ENCODE measurements at regions of chr7 and their contacts with region 1.

Region 1: GRCh38 chr7:55534175-55534915 is 38.0 kb downstream of the VOPP1 start:
- DNase-seq: peak in 3 of 9 donors; percentile 7 to 79 (median 36)
- ATAC-seq: peak; percentile 75
- H3K4me3 ChIP-seq: no peak overlapping the region
- H3K4me3 Mint-ChIP-seq: peak overlapping the region; percentile 75 to 86 (median 82)
- H3K27ac ChIP-seq: no peak overlapping the region
- H3K27ac Mint-ChIP-seq: peak overlapping the region; percentile 74 to 98 (median 83)
- H3K4me1 ChIP-seq: peaks cover 57 to 75% of the 10 kb centered on the region in 2 donors
- H3K4me1 Mint-ChIP-seq: peaks cover 73 to 98% (median 90%) of the 10 kb centered on the region in 7 donors
- H3K27me3 ChIP-seq: no peaks in the 10 kb centered on the region
- H3K27me3 Mint-ChIP-seq: peaks cover 0 to 2% (median 0%) of the 10 kb centered on the region in 5 donors

Region 2: DNA sequence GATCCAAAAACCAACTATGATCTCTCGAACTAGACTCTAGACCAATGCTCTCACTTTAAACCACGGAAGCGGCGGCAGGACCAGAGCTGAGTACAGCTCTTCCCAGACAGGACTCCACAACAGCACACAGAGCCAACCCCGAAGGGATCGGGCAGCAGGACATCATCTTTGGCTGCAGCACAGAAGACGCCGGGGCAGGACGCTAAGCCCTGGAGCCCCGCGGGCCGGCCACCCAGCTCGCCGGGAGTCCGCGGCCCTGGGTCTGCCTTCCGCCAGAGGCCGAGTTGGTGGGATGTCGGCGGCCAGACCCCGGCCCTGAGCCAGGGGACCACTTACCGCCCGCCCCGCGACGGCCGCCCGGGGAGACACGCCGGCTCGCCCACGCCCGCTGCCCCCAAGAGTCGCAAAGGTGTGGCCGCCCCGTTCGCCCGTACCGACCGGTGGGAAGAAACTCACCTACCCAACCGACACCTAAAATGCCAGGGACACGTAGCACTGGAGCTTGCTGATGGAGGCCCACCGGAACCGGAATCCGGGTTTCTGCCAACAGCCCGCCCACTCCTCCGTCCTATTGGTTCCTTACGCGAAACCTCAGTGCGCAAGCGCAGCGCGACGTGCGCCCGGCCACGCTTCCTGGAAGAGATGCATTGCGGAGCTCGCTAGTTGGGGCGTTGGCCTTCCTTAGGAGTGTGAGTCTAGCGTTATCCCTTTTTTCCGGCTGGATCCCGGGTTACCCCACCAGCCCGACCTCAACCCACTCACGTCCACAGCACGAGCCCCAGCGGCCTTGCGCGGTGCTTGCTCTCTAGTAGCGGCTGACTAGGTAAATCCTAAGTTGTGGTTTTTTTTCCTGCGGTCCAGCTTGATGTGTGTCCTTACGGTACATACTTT is 775.4 kb before region 1 on chr7 and contains the start of gene SEC61G:
- CTCF ChIA-PET with region 1: no interaction called
- POLR2A ChIA-PET with region 1: no interaction called
- intact Hi-C with region 1: loop called in 1 of 2 experiments (anchors 1 kb)
- DNase-seq: peak; percentile 92 to 96 (median 94)
- ATAC-seq: peak; percentile 98
- H3K4me3 ChIP-seq: peak within 1 kb of the TSS; percentile 67
- H3K4me3 Mint-ChIP-seq: peak within 1 kb of the TSS; percentile 94 to 100 (median 100)
- H3K27ac ChIP-seq: peak within 1 kb of the TSS; percentile 83
- H3K27ac Mint-ChIP-seq: peak within 1 kb of the TSS; percentile 93 to 98 (median 96)
- H3K4me1 ChIP-seq: peaks cover 7 to 11% of the 10 kb centered on the region in 2 donors
- H3K4me1 Mint-ChIP-seq: peaks cover 15 to 54% (median 40%) of the 10 kb centered on the region in 7 donors
- H3K27me3 ChIP-seq: no peaks in the 10 kb centered on the region
- H3K27me3 Mint-ChIP-seq: peaks cover 0 to 21% (median 5%) of the 10 kb centered on the region in 5 donors
- total RNA-seq, gene SEC61G: 31.8 to 174 (median 46.6) TPM

Region 3: DNA sequence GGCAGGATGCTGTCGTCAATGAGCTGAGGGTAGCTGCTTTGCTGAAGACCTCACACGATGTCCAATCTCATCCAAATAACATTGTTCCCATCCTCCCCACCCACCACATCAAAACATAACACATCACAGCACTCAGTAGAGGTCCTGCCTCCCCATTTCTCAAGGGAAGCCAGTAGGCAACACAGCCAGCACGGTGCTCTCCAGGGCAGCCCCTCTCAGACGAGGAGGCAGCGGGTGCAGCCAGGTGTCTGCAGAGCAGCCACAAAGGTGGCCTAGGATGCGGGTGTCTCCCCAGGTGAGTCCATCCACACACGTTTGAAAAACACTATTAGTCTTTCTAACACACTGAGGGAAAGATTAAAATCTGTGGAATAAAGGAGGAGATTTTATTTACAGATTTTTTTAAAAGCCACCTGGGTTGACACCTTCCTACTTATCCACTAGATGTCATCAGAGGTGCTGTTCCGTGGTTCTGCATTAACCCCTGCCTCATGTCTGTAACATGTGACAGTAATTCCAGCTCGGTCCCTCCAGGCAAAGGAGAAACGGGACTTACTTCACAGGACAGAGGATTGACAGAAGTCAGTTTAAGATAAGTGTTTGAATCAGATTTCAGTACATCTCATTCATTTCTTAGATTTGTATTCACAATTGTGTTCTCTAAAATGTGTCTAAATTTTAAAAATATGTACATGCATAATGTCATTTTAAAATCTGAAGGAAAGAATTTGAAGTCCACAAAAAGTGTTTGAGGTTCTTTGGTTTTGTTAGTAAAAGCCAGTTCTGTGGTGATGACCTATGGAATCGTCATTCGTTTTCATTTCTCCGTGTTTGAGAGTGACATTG is 101.2 kb before region 1 on chr7:
- CTCF ChIA-PET with region 1: interaction called, 4 read pairs
- POLR2A ChIA-PET with region 1: interaction called, 3 read pairs
- intact Hi-C with region 1: loop called in 1 of 2 experiments (anchors 1 kb)
- DNase-seq: peak in 5 of 9 donors; percentile 44 to 54 (median 48)
- ATAC-seq: peak; percentile 61
- H3K4me3 ChIP-seq: no peak overlapping the region
- H3K4me3 Mint-ChIP-seq: peak overlapping the region in 1 of 10 donors; percentile 19
- H3K27ac ChIP-seq: no peak overlapping the region
- H3K27ac Mint-ChIP-seq: peak overlapping the region in 5 of 9 donors; percentile 7 to 76 (median 67)
- H3K4me1 ChIP-seq: peaks cover 0 to 29% of the 10 kb centered on the region in 2 donors
- H3K4me1 Mint-ChIP-seq: peaks cover 17 to 46% (median 40%) of the 10 kb centered on the region in 7 donors
- H3K27me3 ChIP-seq: no peaks in the 10 kb centered on the region
- H3K27me3 Mint-ChIP-seq: no peaks in the 10 kb centered on the region

Region 4: GRCh38 chr7:55477781-55478374 is 56.5 kb before region 1 on chr7:
- CTCF ChIA-PET with region 1: no interaction called
- POLR2A ChIA-PET with region 1: no interaction called
- intact Hi-C with region 1: loop called in 1 of 2 experiments (anchors 1 kb)
- DNase-seq: no peak
- ATAC-seq: no peak
- H3K4me3 ChIP-seq: no peak overlapping the region
- H3K4me3 Mint-ChIP-seq: peak overlapping the region in 7 of 10 donors; percentile 0 to 79 (median 66)
- H3K27ac ChIP-seq: peak overlapping the region; percentile 61
- H3K27ac Mint-ChIP-seq: peak overlapping the region; percentile 35 to 95 (median 92)
- H3K4me1 ChIP-seq: peaks cover 37 to 64% of the 10 kb centered on the region in 2 donors
- H3K4me1 Mint-ChIP-seq: peaks cover 48 to 98% (median 86%) of the 10 kb centered on the region in 7 donors
- H3K27me3 ChIP-seq: no peaks in the 10 kb centered on the region
- H3K27me3 Mint-ChIP-seq: no peaks in the 10 kb centered on the region

Region 5: DNA sequence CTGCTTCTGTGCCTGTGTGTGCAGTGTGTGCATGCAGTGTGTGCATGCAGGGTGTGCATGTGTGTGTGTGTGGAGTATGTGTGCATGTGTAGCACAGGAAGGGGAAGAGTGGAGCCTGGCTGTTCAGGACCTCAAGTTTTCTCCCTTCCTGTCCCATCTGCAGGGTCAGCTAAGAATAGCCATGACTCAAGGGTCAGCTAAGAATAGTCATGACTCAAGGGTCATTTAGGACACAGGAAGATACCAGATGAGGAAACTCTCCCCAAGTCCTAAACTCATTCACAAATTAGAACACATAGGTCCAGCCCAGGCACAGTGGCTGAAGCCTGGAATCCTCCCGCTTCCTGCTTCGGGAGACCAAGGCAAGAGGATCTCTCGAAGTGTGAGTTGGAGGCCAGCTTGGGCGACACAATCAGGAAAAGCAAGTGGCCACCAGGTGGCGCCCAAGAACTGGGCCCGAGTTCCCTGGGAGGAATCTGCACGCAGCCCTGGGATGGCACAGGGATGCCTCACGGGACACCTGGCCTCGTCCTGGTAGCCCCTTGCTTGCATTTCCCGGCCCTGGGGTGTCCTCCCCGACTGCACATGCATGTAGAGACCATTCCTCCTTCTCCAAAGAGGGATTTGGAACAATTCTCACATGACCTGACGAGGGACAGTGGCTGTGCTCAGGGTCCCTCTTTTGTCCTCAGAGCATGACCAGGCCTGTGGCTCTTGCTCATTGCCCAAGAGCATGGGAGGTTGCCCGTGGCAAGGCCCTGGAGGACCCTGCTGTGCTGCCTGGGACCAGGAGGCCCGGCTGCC is 59.4 kb after region 1 on chr7:
- CTCF ChIA-PET with region 1: interaction called, 3 read pairs
- POLR2A ChIA-PET with region 1: no interaction called
- intact Hi-C with region 1: loop called (anchors 2 to 5 kb)
- DNase-seq: peak in 7 of 9 donors; percentile 40 to 79 (median 60)
- ATAC-seq: peak; percentile 60
- H3K4me3 ChIP-seq: no peak overlapping the region
- H3K4me3 Mint-ChIP-seq: no peak overlapping the region
- H3K27ac ChIP-seq: no peak overlapping the region
- H3K27ac Mint-ChIP-seq: no peak overlapping the region
- H3K4me1 ChIP-seq: peaks cover 0 to 4% of the 10 kb centered on the region in 2 donors
- H3K4me1 Mint-ChIP-seq: peaks cover 4 to 24% (median 11%) of the 10 kb centered on the region in 7 donors
- H3K27me3 ChIP-seq: no peaks in the 10 kb centered on the region
- H3K27me3 Mint-ChIP-seq: peaks cover 0 to 5% (median 2%) of the 10 kb centered on the region in 5 donors

Region 6: DNA sequence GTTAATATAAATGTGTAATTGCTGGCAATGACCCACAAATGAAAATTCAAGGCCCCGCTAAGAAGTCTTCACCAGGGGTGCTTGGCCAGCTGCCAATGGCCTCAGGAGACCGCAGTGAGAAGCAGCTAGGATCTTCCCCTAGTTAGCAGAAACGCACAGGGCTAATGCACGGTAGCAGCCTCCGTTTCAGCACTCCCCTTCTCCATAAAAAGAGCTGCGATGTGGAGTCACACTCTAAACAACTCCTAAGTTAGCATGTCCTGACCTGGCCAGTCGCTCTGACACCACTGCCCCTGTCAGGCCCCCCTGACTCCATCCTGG is 189.2 kb after region 1 on chr7:
- CTCF ChIA-PET with region 1: no interaction called
- POLR2A ChIA-PET with region 1: no interaction called
- intact Hi-C with region 1: no loop called
- DNase-seq: no peak
- ATAC-seq: no peak
- H3K4me3 ChIP-seq: no peak overlapping the region
- H3K4me3 Mint-ChIP-seq: no peak overlapping the region
- H3K27ac ChIP-seq: no peak overlapping the region
- H3K27ac Mint-ChIP-seq: no peak overlapping the region
- H3K4me1 ChIP-seq: no peaks in the 10 kb centered on the region
- H3K4me1 Mint-ChIP-seq: peaks cover 0 to 3% (median 0%) of the 10 kb centered on the region in 7 donors
- H3K27me3 ChIP-seq: no peaks in the 10 kb centered on the region
- H3K27me3 Mint-ChIP-seq: peaks cover 0 to 9% (median 0%) of the 10 kb centered on the region in 5 donors

Region 7: DNA sequence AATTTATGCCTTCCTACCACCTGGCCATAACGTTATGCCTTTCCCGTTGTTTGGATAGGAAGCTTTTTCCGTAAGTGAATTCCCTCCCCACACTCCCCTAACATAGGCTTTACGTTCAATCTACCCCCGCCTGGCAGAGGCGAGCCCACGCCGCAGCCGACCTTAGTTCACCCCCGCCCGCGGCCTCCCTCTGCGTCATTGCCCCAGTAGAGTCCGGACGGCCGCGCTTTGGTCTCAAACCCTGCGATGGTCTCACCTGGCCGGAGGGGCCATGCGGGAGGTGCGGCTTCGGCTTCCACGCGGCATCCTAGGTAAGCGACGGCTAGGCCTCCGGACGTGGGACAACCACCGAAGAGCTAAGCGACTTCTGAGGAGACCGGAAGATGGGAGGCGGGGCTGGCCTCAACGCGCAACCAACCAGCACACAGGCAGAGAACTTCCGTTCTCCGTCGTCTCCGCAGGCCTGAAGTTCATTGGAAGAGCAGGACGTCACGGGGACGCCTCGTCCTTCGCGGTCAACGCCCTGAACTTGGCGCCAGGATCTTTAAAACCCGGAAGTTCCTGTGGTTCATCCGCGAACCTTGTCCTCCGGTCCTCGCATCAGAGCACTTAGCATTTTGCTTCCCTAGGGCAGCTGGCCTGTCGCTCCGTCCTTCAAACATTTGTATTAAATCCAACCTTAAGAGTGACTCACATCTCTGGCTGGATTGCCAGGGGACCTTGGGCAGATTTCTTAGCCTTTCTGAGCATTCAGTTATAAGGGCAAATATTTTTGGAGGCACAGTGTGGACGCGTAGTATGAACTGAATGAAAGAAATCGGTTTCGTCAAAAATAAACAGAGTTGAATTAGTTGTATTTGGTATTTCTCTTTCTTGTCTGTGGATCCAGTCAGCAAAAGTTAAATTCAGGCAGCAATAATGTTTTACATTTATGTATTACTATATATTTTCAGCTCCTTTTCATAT is 572.0 kb after region 1 on chr7 and contains the start of gene CHCHD2:
- CTCF ChIA-PET with region 1: no interaction called
- POLR2A ChIA-PET with region 1: interaction called, 3 read pairs
- intact Hi-C with region 1: loop called in 1 of 2 experiments (anchors 5 kb)
- DNase-seq: peak; percentile 75 to 96 (median 93)
- ATAC-seq: peak; percentile 99
- H3K4me3 ChIP-seq: peak within 1 kb of the TSS; percentile 72
- H3K4me3 Mint-ChIP-seq: peak within 1 kb of the TSS; percentile 94 to 100 (median 96)
- H3K27ac ChIP-seq: peak within 1 kb of the TSS; percentile 95
- H3K27ac Mint-ChIP-seq: peak within 1 kb of the TSS; percentile 97 to 99 (median 98)
- H3K4me1 ChIP-seq: peaks cover 18 to 20% of the 10 kb centered on the region in 2 donors
- H3K4me1 Mint-ChIP-seq: peaks cover 19 to 43% (median 33%) of the 10 kb centered on the region in 7 donors
- H3K27me3 ChIP-seq: no peaks in the 10 kb centered on the region
- H3K27me3 Mint-ChIP-seq: no peaks in the 10 kb centered on the region
- total RNA-seq, gene CHCHD2: 133 to 451 (median 179) TPM

Measured in naive thymus-derived CD4-positive, alpha-beta T cell (primary cell).